MCF 10A (cell line): ENCODE measurements at regions of chr5 and their contacts with region 1.

Region 1: GRCh38 chr5:38922199-38922598 is 76.4 kb downstream of the OSMR start:
- DNase-seq: peak; percentile 65
- H3K4me3 Mint-ChIP-seq: no peak overlapping the region
- H3K27ac Mint-ChIP-seq: no peak overlapping the region
- H3K4me1 Mint-ChIP-seq: no peaks in the 10 kb centered on the region
- H3K27me3 Mint-ChIP-seq: no peaks in the 10 kb centered on the region
- CTCF ChIP-seq: peak; percentile 84

Region 2: GRCh38 chr5:38208782-38209378 is 713.3 kb before region 1 on chr5:
- CTCF ChIA-PET with region 1: interaction called, 7 read pairs
- POLR2A ChIA-PET with region 1: no interaction called
- intact Hi-C with region 1: loop called (anchors 10 kb)
- DNase-seq: peak; percentile 66
- H3K4me3 Mint-ChIP-seq: no peak overlapping the region
- H3K27ac Mint-ChIP-seq: no peak overlapping the region
- H3K4me1 Mint-ChIP-seq: peaks cover 11% of the 10 kb centered on the region
- H3K27me3 Mint-ChIP-seq: peaks cover 44% of the 10 kb centered on the region
- CTCF ChIP-seq: peak; percentile 77

Region 3: GRCh38 chr5:38556599-38557305 is 365.4 kb before region 1 on chr5 and contains the start of gene LIFR:
- CTCF ChIA-PET with region 1: interaction called, 3 read pairs
- POLR2A ChIA-PET with region 1: no interaction called
- intact Hi-C with region 1: loop called (anchors 5 kb)
- DNase-seq: peak; percentile 81
- H3K4me3 Mint-ChIP-seq: peak within 1 kb of the TSS; percentile 81
- H3K27ac Mint-ChIP-seq: peak within 1 kb of the TSS; percentile 33
- H3K4me1 Mint-ChIP-seq: no peaks in the 10 kb centered on the region
- H3K27me3 Mint-ChIP-seq: no peaks in the 10 kb centered on the region
- CTCF ChIP-seq: no peak
- total RNA-seq, gene LIFR: 3.7 and 3.9 TPM in 2 replicates

Region 4: GRCh38 chr5:38672059-38672788 is 250.0 kb before region 1 on chr5:
- CTCF ChIA-PET with region 1: no interaction called
- POLR2A ChIA-PET with region 1: no interaction called
- intact Hi-C with region 1: loop called (anchors 5 kb)
- DNase-seq: peak; percentile 75
- H3K4me3 Mint-ChIP-seq: no peak overlapping the region
- H3K27ac Mint-ChIP-seq: peak overlapping the region; percentile 53
- H3K4me1 Mint-ChIP-seq: peaks cover 37% of the 10 kb centered on the region
- H3K27me3 Mint-ChIP-seq: no peaks in the 10 kb centered on the region
- CTCF ChIP-seq: no peak

Region 5: DNA sequence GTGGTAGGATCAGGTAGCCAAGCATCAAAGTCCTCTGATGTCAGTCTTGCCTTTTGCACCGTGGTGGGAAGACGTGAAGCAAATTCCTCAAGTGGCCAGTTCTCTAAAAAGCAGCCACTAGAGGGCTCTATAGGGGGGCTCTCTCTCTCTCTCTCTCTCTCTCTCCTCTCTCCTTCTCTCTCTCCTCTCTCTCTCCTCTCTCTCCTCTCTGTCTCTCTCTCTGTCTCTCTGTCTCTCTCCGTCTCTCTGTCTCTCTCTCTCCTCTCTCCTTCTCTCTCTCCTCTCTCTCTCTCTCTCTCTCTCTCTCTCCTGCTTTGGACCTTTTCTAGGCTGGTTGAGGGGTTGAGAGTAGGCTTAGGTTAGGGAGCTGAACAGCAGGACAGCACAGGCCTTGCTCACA is 90.3 kb before region 1 on chr5:
- CTCF ChIA-PET with region 1: interaction called, 4 read pairs
- POLR2A ChIA-PET with region 1: interaction called, 4 read pairs
- intact Hi-C with region 1: loop called (anchors 1 kb)
- DNase-seq: peak; percentile 61
- H3K4me3 Mint-ChIP-seq: no peak overlapping the region
- H3K27ac Mint-ChIP-seq: peak overlapping the region; percentile 54
- H3K4me1 Mint-ChIP-seq: peaks cover 52% of the 10 kb centered on the region
- H3K27me3 Mint-ChIP-seq: no peaks in the 10 kb centered on the region
- CTCF ChIP-seq: peak; percentile 24

Region 6: GRCh38 chr5:38845526-38846378 is 76.4 kb before region 1 on chr5 and contains the start of gene OSMR:
- CTCF ChIA-PET with region 1: interaction called, 13 read pairs
- POLR2A ChIA-PET with region 1: no interaction called
- intact Hi-C with region 1: loop called (anchors 1 kb)
- DNase-seq: peak; percentile 99
- H3K4me3 Mint-ChIP-seq: peak within 1 kb of the TSS; percentile 99
- H3K27ac Mint-ChIP-seq: peak within 1 kb of the TSS; percentile 99
- H3K4me1 Mint-ChIP-seq: peaks cover 29% of the 10 kb centered on the region
- H3K27me3 Mint-ChIP-seq: no peaks in the 10 kb centered on the region
- CTCF ChIP-seq: no peak
- total RNA-seq, gene OSMR: 86.1 and 89.1 TPM in 2 replicates

Region 7: GRCh38 chr5:39294736-39295135 is 372.5 kb after region 1 on chr5:
- CTCF ChIA-PET with region 1: no interaction called
- POLR2A ChIA-PET with region 1: no interaction called
- intact Hi-C with region 1: no loop called
- DNase-seq: no peak
- H3K4me3 Mint-ChIP-seq: no peak overlapping the region
- H3K27ac Mint-ChIP-seq: no peak overlapping the region
- H3K4me1 Mint-ChIP-seq: no peaks in the 10 kb centered on the region
- H3K27me3 Mint-ChIP-seq: no peaks in the 10 kb centered on the region
- CTCF ChIP-seq: no peak